Dorsolateral prefrontal cortex (tissue), 120 donors: ENCODE measurements at regions of chr19 and their contacts with region 1.

Region 1: GRCh38 chr19:40662921-40663694 is 27.3 kb downstream of the NUMBL start:
- DNase-seq: peak; percentile 80 to 93 (median 89)
- H3K4me3 ChIP-seq: peak overlapping the region; percentile 59 to 89 (median 76)
- H3K27ac ChIP-seq: peak overlapping the region in 56 of 59 donors; percentile 40 to 93 (median 78)
- H3K27me3 ChIP-seq: no peaks in the 10 kb centered on the region
- CTCF ChIP-seq: peak in 52 of 56 donors; percentile 4 to 99 (median 98)

Region 2: DNA sequence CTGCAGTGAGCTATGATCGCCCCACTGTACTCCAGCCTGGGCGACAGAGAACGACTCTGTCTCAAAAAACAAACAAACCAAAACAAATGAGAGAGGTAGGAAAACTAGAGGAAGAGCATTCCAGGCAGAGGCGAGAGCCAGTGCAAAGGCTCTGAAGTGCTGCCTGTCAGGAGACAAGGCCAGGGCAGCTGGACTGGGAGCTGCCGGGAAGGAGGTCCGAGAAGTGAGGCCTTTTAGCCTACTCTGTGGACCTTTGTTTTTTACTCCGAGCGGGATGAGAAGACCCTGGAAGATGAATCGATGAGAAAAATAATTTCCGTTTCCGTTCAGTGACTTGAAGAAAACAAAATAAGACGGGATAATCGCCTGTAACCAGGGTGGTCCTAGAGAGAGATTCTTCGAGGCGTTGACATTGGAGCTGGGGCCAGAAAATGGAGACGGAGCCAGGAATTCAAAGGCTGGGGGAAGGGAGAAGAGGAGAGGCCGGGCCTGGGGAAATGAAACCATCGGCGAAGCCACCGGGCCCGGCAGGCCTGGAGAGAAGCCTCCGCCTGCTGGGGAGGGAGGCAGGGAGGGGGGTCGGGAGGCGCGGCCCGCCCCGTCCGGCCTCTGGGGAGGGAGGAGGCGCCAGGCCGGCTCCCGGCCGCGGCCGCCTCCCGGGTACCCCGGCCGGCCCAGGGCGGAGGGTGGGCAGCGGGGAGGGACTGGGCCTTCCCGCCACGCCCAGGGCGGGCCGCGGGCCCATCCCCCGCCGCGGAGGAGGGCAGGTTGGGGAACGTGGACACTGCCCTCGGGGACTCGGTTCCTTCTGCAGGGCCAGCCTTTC is 229.5 kb before region 1 on chr19:
- intact Hi-C with region 1: no loop called
- DNase-seq: peak; percentile 47 to 84 (median 64)
- H3K4me3 ChIP-seq: peak overlapping the region; percentile 27 to 73 (median 57)
- H3K27ac ChIP-seq: peak overlapping the region; percentile 87 to 99 (median 97)
- H3K27me3 ChIP-seq: no peaks in the 10 kb centered on the region
- CTCF ChIP-seq: peak in 14 of 56 donors; percentile 2 to 42 (median 21)

Region 3: DNA sequence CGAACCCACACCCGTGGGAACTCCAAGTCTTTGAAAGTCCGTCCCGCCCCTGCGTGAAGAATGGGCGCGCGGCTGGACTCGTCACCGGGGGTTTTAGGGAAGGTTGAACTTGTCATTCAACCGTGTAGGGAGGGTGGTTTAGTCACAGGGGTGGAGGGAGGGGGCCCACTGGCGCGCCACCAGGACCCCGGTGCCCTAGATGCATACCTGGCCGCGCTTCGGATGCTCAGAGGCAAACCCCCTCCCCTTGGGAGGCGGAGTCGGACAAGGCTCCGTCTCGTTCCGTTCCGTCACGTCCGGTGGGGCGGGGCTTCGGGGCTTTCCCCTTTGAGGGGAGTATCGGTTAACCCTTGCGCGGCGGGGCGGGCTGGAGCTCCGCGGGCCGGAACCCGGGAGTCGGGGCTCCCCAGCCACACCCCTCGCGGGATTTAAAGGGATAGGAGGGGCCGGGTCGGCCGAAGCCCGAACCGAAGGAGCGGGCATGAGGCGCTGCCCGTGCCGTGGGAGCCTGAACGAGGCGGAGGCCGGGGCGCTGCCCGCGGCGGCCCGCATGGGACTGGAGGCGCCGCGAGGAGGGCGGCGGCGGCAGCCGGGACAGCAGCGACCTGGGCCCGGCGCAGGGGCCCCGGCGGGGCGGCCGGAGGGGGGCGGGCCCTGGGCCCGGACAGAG is 53.7 kb after region 1 on chr19 and contains the starts of genes COQ8B and ITPKC:
- intact Hi-C with region 1: loop called in 1 of 2 experiments (anchors 2 kb)
- DNase-seq: peak; percentile 99 to 100 (median 100)
- H3K4me3 ChIP-seq: peak within 1 kb of the TSS; percentile 61 to 97 (median 83)
- H3K27ac ChIP-seq: peak within 1 kb of the TSS; percentile 75 to 98 (median 95)
- H3K27me3 ChIP-seq: no peaks in the 10 kb centered on the region
- CTCF ChIP-seq: peak in 28 of 56 donors; percentile 9 to 42 (median 20)
- total RNA-seq, gene COQ8B: 22.8 to 64.2 (median 35.5) TPM
- total RNA-seq, gene ITPKC: 6.6 to 73.8 (median 12.0) TPM

Region 4: DNA sequence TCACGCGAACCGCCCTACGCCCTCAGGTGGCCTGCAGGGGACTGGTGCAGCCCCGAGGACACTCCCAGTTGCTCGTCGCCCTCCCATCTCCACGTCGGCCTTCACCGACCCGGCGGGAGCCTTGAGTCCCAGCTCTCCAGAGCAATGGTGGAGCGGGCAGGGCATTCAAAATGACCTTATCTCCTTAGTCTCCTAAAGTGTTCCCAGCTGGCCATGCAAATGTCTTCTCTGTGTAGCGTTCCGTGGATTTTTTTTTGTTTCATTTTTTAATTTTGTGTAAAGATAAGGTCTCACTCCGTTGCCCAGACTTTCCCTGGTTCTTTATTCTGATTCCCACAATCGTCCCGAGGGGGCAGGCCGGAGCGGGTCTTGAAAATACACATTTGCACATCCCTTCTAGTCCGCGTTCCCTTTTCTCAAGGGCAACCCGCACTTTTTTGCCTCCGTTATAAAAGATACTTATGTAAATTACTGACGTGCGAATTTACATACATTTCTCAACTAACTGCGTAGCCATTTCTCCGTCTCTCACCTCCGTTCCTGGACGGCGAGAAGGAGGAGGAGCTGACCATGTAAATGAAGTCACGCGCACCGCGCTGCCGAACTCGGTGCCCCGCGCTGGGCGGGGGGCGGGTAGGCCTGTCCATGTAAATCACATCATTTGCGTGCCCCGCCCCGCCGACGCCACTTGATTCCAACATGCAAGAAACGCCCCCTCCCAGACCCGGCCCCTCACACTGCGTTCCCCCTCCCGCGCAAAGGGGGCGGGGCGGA is 135.3 kb after region 1 on chr19:
- intact Hi-C with region 1: loop called (anchors 5 kb)
- DNase-seq: peak; percentile 99 to 100 (median 100)
- H3K4me3 ChIP-seq: peak overlapping the region; percentile 38 to 99 (median 93)
- H3K27ac ChIP-seq: peak overlapping the region; percentile 79 to 99 (median 96)
- H3K27me3 ChIP-seq: no peaks in the 10 kb centered on the region
- CTCF ChIP-seq: peak; percentile 13 to 68 (median 48)

Region 5: DNA sequence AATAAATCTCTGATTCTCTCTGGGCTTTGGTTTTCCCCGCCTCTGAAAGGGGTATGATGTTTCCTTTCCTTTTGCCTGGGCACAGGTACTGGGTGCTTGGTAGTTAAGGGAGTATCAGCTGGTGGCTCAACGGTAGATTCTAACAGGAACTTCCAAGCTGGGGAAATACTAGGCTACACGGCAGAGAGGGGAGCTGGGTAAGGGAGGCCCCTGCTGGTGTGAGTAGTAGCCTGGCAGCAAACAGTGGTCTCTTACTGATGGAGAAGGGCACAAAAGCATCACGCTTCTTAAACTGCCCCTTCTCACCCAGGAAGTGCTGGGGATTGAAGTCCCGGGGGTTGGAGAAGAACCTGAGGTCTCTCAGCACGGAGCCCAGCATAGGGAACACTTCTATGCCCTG is 245.9 kb after region 1 on chr19:
- intact Hi-C with region 1: loop called in 1 of 2 experiments (anchors 10 kb)
- DNase-seq: no peak
- H3K4me3 ChIP-seq: peak overlapping the region in 7 of 59 donors; percentile 5 to 51 (median 35)
- H3K27ac ChIP-seq: no peak overlapping the region
- H3K27me3 ChIP-seq: peaks cover 0 to 6% (median 0%) of the 10 kb centered on the region in 45 donors
- CTCF ChIP-seq: peak in 17 of 56 donors; percentile 14 to 49 (median 36)

Region 6: DNA sequence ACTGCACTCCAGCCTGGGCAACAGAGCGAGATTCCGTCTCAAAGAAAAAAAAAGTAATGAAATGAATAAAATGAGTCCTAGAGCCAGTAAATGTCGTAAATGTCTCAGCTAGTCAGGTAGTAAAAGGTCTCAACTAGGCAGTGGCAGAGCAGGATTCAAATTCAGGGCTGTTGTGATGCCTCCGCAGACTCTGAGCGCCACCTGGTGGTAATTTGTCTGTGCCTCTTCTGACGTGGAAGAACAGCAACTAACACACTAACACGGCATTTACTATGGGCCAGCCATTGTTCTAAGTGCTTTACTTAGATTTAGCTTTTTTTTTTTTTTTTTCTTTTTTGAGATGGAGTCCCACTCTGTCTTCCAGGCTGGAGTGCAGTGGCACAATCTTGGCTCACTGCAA is 481.3 kb after region 1 on chr19:
- intact Hi-C with region 1: loop called (anchors 2 to 5 kb)
- DNase-seq: peak; percentile 21 to 77 (median 58)
- H3K4me3 ChIP-seq: no peak overlapping the region
- H3K27ac ChIP-seq: no peak overlapping the region
- H3K27me3 ChIP-seq: peaks cover 0 to 14% (median 0%) of the 10 kb centered on the region in 45 donors
- CTCF ChIP-seq: peak; percentile 34 to 84 (median 72)